ENCODE measurements at regions of chr3 and their contacts with region 1.

Region 1: GRCh38 chr3:108589146-108589997 is at the starts of genes CIP2A and DZIP3:
- DNase-seq: peak; percentile 71 to 96 (median 81)
- ATAC-seq: peak; percentile 79
- H3K4me3 ChIP-seq: peak within 1 kb of the TSS; percentile 90 to 93
- H3K4me3 Mint-ChIP-seq: peak within 1 kb of the TSS; percentile 97
- H3K27ac ChIP-seq: peak within 1 kb of the TSS; percentile 91 to 98
- H3K27ac Mint-ChIP-seq: peak within 1 kb of the TSS; percentile 99
- H3K4me1 ChIP-seq: peaks cover 14% of the 10 kb centered on the region
- H3K4me1 Mint-ChIP-seq: peaks cover 31% of the 10 kb centered on the region
- H3K27me3 ChIP-seq: no peaks in the 10 kb centered on the region
- H3K27me3 Mint-ChIP-seq: no peaks in the 10 kb centered on the region
- CTCF ChIP-seq: no peak
- total RNA-seq, gene CIP2A: 3.0 to 4.2 TPM
- total RNA-seq, gene DZIP3: 8.7 to 9.4 TPM

Region 2: GRCh38 chr3:108376026-108376425 is 213.3 kb before region 1 on chr3:
- CTCF ChIA-PET with region 1: no interaction called
- POLR2A ChIA-PET with region 1: no interaction called
- intact Hi-C with region 1: no loop called
- DNase-seq: no peak
- ATAC-seq: no peak
- H3K4me3 ChIP-seq: no peak overlapping the region
- H3K4me3 Mint-ChIP-seq: no peak overlapping the region
- H3K27ac ChIP-seq: no peak overlapping the region
- H3K27ac Mint-ChIP-seq: no peak overlapping the region
- H3K4me1 ChIP-seq: no peaks in the 10 kb centered on the region
- H3K4me1 Mint-ChIP-seq: no peaks in the 10 kb centered on the region
- H3K27me3 ChIP-seq: no peaks in the 10 kb centered on the region
- H3K27me3 Mint-ChIP-seq: no peaks in the 10 kb centered on the region
- CTCF ChIP-seq: no peak

Region 3: DNA sequence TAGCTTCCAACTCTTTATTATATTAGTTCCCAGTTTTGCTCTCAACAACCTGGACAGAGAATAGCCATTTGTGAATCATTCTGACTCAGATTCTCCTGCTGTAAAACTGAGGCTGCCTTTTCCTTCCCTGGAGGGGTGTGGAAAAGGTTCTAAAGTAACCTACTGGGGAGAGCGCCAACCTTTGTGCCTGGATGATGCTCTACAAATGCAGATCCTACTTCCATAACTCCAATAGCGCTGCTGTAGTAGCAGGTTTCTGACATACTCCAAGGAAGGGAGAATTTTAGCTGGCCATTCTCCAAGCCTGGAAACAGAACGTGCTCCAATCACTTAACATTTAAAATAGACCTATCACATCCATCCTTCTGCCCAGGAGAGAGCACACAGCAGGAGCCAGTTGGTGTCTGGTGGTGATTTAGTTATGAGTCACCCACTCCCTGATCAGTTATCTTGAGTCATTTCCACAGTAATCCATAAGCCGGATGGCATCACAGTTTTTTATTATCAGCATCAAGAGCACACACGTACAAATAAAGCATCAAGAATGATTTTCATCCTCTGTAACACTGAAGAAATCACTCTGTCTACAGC is 117.3 kb before region 1 on chr3:
- CTCF ChIA-PET with region 1: no interaction called
- POLR2A ChIA-PET with region 1: no interaction called
- intact Hi-C with region 1: no loop called
- DNase-seq: no peak
- ATAC-seq: no peak
- H3K4me3 ChIP-seq: no peak overlapping the region
- H3K4me3 Mint-ChIP-seq: no peak overlapping the region
- H3K27ac ChIP-seq: no peak overlapping the region
- H3K27ac Mint-ChIP-seq: no peak overlapping the region
- H3K4me1 ChIP-seq: no peaks in the 10 kb centered on the region
- H3K4me1 Mint-ChIP-seq: no peaks in the 10 kb centered on the region
- H3K27me3 ChIP-seq: no peaks in the 10 kb centered on the region
- H3K27me3 Mint-ChIP-seq: no peaks in the 10 kb centered on the region
- CTCF ChIP-seq: no peak

Region 4: DNA sequence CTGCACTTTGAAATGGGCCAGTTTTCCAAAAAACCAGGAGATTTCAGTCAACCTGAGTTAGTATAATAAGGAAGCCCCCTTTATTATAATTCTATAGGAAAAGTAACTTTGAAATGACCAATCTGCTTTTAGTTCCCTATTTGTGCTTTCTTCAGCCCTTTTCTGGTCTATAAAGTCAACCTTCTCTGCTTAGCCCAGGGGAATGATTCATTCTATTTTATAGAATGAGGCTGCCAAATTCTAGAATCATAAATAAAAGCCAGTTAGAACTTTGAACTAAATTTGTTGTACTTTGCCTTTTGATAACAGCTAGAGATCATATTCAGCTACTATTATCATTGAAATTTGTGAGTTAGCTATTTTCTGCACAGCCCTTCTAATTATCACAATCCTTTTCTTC is 24.8 kb before region 1 on chr3:
- CTCF ChIA-PET with region 1: no interaction called
- POLR2A ChIA-PET with region 1: no interaction called
- intact Hi-C with region 1: no loop called
- DNase-seq: no peak
- ATAC-seq: no peak
- H3K4me3 ChIP-seq: no peak overlapping the region
- H3K4me3 Mint-ChIP-seq: no peak overlapping the region
- H3K27ac ChIP-seq: no peak overlapping the region
- H3K27ac Mint-ChIP-seq: no peak overlapping the region
- H3K4me1 ChIP-seq: no peaks in the 10 kb centered on the region
- H3K4me1 Mint-ChIP-seq: no peaks in the 10 kb centered on the region
- H3K27me3 ChIP-seq: no peaks in the 10 kb centered on the region
- H3K27me3 Mint-ChIP-seq: no peaks in the 10 kb centered on the region
- CTCF ChIP-seq: no peak

Region 5: DNA sequence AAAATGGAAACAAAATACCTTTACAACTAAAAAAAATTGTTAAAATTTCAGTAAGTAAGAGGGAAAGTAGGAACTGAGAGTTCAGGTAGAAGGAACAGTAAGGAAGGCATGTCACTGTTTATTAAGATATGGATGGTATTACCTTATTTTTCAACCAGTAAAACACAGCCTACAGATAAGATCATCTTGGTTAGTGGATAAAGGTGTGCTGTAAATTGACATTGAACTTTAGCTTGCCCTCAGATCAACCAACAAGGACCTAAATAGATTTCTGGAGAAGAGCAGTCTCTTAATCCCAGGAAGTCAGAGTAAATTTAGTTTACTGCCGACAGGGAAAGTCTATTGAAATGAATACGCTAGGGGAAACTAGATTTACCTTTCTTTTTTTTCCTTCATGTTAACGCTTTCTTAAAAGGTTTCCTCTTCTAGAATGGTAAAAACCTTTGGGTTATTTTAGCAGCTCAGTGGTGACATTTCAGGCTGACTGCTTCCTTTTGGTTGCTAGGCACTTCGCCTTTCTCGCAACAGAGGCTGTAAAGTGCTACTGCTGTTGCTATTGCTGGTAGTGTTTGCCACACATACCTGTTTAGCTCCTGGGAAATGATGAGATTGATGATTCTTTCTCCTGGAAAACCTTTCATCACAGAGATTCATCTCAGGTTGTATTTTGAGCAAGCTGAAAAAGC is 13.0 kb after region 1 on chr3:
- CTCF ChIA-PET with region 1: interaction called, 52 read pairs
- POLR2A ChIA-PET with region 1: interaction called, 96 read pairs
- intact Hi-C with region 1: loop called in 1 of 2 experiments (anchors 1 kb)
- DNase-seq: peak in 8 of 9 experiments; percentile 20 to 79 (median 46)
- ATAC-seq: peak; percentile 87
- H3K4me3 ChIP-seq: peak overlapping the region; percentile 11 to 31
- H3K4me3 Mint-ChIP-seq: peak overlapping the region; percentile 80
- H3K27ac ChIP-seq: peak overlapping the region; percentile 32 to 75
- H3K27ac Mint-ChIP-seq: peak overlapping the region; percentile 94
- H3K4me1 ChIP-seq: peaks cover 45% of the 10 kb centered on the region
- H3K4me1 Mint-ChIP-seq: peaks cover 67% of the 10 kb centered on the region
- H3K27me3 ChIP-seq: no peaks in the 10 kb centered on the region
- H3K27me3 Mint-ChIP-seq: no peaks in the 10 kb centered on the region
- CTCF ChIP-seq: no peak

Region 6: DNA sequence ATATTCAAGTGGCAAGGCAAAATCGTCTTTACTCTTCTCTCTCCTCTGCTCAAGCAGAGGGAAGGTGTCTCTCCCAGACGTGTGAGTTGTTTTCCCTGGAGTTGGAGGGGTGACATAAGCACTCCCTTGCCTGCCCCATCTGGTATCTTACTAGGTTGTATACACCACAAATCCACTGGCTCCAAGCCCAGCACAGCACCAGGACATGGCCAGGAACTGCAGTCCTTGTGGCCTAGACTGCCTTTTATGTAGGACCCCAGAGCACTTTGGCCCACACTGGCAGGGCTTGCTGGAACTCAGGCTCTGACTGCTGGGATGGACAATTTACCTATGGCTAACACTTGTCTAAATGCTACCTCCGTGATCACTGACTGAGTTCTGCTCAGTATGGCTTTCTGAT is 34.1 kb after region 1 on chr3:
- CTCF ChIA-PET with region 1: no interaction called
- POLR2A ChIA-PET with region 1: interaction called, 3 read pairs
- intact Hi-C with region 1: loop called in 1 of 2 experiments (anchors 5 kb)
- DNase-seq: no peak
- ATAC-seq: no peak
- H3K4me3 ChIP-seq: no peak overlapping the region
- H3K4me3 Mint-ChIP-seq: no peak overlapping the region
- H3K27ac ChIP-seq: no peak overlapping the region
- H3K27ac Mint-ChIP-seq: no peak overlapping the region
- H3K4me1 ChIP-seq: no peaks in the 10 kb centered on the region
- H3K4me1 Mint-ChIP-seq: no peaks in the 10 kb centered on the region
- H3K27me3 ChIP-seq: no peaks in the 10 kb centered on the region
- H3K27me3 Mint-ChIP-seq: no peaks in the 10 kb centered on the region
- CTCF ChIP-seq: no peak

Measured in CD8-positive, alpha-beta T cell (primary cell).